Activated CD4-positive, alpha-beta memory T cell treated with anti-CD3 and anti-CD28 coated beads for 36 hours (primary cell): ENCODE measurements at regions of chr4 and their contacts with region 1.

Region 1: DNA sequence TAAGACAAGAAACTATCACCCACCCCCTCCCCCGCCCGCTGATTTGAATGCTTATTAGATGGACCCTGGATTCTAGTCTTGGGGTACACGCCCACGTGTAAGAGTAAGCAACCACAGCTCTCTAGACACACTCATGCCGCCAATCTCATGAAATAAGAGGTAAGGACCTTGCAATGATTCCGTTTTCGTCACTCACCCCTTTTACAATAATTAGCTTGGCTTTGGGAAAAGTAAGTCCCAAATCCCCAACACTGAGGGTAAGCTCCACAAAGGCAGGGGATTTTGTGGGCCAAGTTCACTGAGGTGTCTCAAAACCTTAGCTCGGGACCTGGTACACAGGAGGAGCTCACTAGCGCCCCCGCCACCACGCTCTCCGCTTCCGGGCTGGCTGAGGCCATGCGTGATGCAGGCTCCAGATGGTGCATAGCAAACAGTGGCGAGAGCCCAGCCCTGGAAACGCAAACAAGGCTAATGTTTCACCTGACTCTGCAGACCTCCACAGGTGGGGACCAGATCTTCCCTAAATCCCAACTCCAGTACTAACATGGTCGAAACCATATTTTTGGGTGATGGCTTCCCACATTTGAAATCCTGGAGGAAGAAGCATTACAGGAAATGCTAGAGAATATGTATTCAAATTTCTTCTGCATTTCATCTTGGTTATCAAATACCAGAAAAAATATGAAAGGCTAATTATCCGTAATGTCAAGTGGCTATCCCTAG is 4.1 kb downstream of the PLAC8 start:
- DNase-seq: peak; percentile 94
- H3K4me3 Mint-ChIP-seq: peak overlapping the region; percentile 92
- H3K27ac Mint-ChIP-seq: peak overlapping the region; percentile 98
- H3K4me1 Mint-ChIP-seq: peaks cover 46% of the 10 kb centered on the region
- H3K27me3 Mint-ChIP-seq: no peaks in the 10 kb centered on the region

Region 2: GRCh38 chr4:82373816-82374625 is 736.4 kb before region 1 on chr4 and contains the start of gene HNRNPD:
- CTCF ChIA-PET with region 1: no interaction called
- POLR2A ChIA-PET with region 1: no interaction called
- intact Hi-C with region 1: loop called (anchors 2 kb)
- DNase-seq: peak; percentile 96
- H3K4me3 Mint-ChIP-seq: peak within 1 kb of the TSS; percentile 97
- H3K27ac Mint-ChIP-seq: peak within 1 kb of the TSS; percentile 97
- H3K4me1 Mint-ChIP-seq: peaks cover 35% of the 10 kb centered on the region
- H3K27me3 Mint-ChIP-seq: no peaks in the 10 kb centered on the region
- total RNA-seq, gene HNRNPD: 398 to 400 TPM

Region 3: GRCh38 chr4:83012687-83013419 is 97.5 kb before region 1 on chr4:
- CTCF ChIA-PET with region 1: interaction called, 3 read pairs
- POLR2A ChIA-PET with region 1: interaction called, 5 read pairs
- intact Hi-C with region 1: loop called (anchors 2 kb)
- DNase-seq: peak; percentile 98
- H3K4me3 Mint-ChIP-seq: peak overlapping the region; percentile 92
- H3K27ac Mint-ChIP-seq: peak overlapping the region; percentile 92
- H3K4me1 Mint-ChIP-seq: peaks cover 36% of the 10 kb centered on the region
- H3K27me3 Mint-ChIP-seq: no peaks in the 10 kb centered on the region

Region 4: DNA sequence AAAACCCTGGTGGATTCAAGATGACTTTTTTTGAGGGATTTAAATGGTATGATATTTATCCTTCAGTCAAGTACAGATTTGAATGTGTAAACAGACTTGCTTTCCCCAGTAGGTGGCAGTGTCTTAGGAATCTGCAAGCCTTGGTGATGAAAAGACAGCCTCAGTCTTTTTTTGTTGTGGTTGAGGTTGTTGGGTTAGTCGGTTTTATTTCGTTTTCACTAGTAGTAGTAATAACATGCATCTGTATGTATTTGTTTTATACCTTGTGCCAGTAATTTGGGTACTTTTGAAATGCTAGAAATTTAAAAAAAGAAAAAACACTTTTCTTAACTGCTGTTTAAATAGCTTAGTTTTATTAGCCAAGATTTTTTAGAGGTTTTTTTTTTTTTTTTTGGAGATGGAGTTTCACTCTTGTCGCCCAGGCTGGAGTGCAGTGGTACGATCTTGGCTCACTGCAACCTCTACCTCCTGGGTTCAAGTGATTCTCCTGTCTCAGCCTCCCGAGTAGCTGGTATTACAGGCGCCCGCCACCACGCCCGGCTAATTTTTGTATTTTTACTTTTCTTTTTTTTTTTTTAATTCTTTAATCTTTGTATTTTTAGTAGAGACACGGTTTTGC is 36.2 kb before region 1 on chr4:
- CTCF ChIA-PET with region 1: interaction called, 21 read pairs
- POLR2A ChIA-PET with region 1: interaction called, 5 read pairs
- intact Hi-C with region 1: loop called (anchors 1 kb)
- DNase-seq: peak; percentile 49
- H3K4me3 Mint-ChIP-seq: peak overlapping the region; percentile 16
- H3K27ac Mint-ChIP-seq: no peak overlapping the region
- H3K4me1 Mint-ChIP-seq: peaks cover 8% of the 10 kb centered on the region
- H3K27me3 Mint-ChIP-seq: no peaks in the 10 kb centered on the region

Region 5: DNA sequence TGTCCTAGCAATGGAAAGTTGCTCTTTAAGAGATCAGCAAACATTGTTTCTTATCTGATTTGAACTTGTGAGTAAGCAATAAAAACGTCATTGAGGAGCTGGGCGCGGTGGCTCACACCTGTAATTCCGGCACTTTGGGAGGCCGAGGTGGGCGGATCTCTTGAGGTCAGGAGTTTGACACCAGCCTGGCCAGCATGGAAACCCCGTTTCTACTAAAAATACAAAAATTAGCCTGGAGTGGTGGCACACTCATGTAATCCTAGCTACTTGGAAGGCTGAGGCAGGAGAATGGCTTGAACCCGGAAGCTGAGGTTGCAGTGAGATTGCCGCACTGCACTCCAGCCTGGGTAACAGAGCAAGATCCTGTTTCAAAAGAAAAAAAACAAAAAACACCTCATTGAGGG is 15.4 kb after region 1 on chr4:
- CTCF ChIA-PET with region 1: interaction called, 3 read pairs
- POLR2A ChIA-PET with region 1: interaction called, 5 read pairs
- intact Hi-C with region 1: loop called (anchors 1 kb)
- DNase-seq: peak; percentile 70
- H3K4me3 Mint-ChIP-seq: peak overlapping the region; percentile 45
- H3K27ac Mint-ChIP-seq: no peak overlapping the region
- H3K4me1 Mint-ChIP-seq: peaks cover 10% of the 10 kb centered on the region
- H3K27me3 Mint-ChIP-seq: no peaks in the 10 kb centered on the region

Region 6: GRCh38 chr4:83237591-83237990 is 127.2 kb after region 1 on chr4:
- CTCF ChIA-PET with region 1: interaction called, 5 read pairs
- POLR2A ChIA-PET with region 1: no interaction called
- intact Hi-C with region 1: loop called (anchors 1 kb)
- DNase-seq: no peak
- H3K4me3 Mint-ChIP-seq: no peak overlapping the region
- H3K27ac Mint-ChIP-seq: no peak overlapping the region
- H3K4me1 Mint-ChIP-seq: peaks cover 36% of the 10 kb centered on the region
- H3K27me3 Mint-ChIP-seq: peaks cover 41% of the 10 kb centered on the region

Region 7: DNA sequence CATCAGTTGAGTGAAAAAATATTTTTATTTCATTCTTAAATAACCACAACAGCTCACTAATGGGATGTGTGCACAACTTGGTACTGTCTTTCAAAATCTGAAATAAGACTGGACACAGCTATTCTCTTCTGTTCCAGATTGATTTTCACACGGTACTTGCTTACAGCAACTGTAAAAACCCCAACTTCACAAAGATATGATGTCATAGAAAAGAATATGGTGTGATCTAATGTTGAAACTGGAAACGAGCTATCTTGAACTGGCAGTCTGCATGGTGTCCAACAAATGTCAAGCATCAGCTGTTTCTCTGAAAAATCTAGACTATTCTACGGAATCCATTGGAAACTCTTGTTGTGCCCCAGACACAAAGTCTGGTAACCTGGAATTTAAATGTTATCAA is 330.5 kb after region 1 on chr4:
- CTCF ChIA-PET with region 1: no interaction called
- POLR2A ChIA-PET with region 1: no interaction called
- intact Hi-C with region 1: no loop called
- DNase-seq: no peak
- H3K4me3 Mint-ChIP-seq: no peak overlapping the region
- H3K27ac Mint-ChIP-seq: no peak overlapping the region
- H3K4me1 Mint-ChIP-seq: no peaks in the 10 kb centered on the region
- H3K27me3 Mint-ChIP-seq: no peaks in the 10 kb centered on the region